Activated CD4-positive, alpha-beta T cell treated with anti-CD3 and anti-CD28 coated beads for 36 hours (primary cell): ENCODE measurements at regions of chr2 and their contacts with region 1.

Region 1: GRCh38 chr2:229780856-229781773 is 66.8 kb upstream of the DNER start:
- DNase-seq: no peak
- ATAC-seq: peak; percentile 68
- H3K4me3 Mint-ChIP-seq: no peak overlapping the region
- H3K27ac Mint-ChIP-seq: no peak overlapping the region
- H3K4me1 Mint-ChIP-seq: peaks cover 15% of the 10 kb centered on the region
- H3K27me3 Mint-ChIP-seq: no peaks in the 10 kb centered on the region

Region 2: DNA sequence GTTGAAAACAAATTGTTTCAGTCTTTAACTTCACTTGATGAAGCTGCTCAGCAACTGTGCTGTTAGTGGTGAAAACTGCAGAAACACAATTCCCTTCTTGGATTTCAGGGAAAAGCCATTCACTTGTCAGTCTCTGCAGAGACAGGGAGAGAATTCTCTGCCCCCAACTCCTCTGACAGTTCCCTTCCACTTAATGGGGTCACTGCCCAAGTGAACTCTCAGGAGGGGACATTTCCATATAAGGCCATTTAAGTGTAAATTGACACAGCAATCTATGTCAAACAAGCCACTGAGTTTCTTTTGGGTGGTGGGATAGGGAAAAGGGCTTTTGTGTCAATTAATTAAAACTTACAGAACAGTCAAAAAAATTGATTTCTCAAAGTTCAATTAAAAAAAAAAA is 15.4 kb before region 1 on chr2:
- CTCF ChIA-PET with region 1: interaction called, 18 read pairs
- POLR2A ChIA-PET with region 1: no interaction called
- intact Hi-C with region 1: no loop called
- DNase-seq: no peak
- ATAC-seq: no peak
- H3K4me3 Mint-ChIP-seq: no peak overlapping the region
- H3K27ac Mint-ChIP-seq: no peak overlapping the region
- H3K4me1 Mint-ChIP-seq: no peaks in the 10 kb centered on the region
- H3K27me3 Mint-ChIP-seq: no peaks in the 10 kb centered on the region

Region 3: GRCh38 chr2:229910832-229911412 is 129.8 kb after region 1 on chr2:
- CTCF ChIA-PET with region 1: no interaction called
- POLR2A ChIA-PET with region 1: no interaction called
- intact Hi-C with region 1: loop called in 1 of 2 experiments (anchors 5 kb)
- DNase-seq: peak; percentile 38
- ATAC-seq: peak; percentile 75
- H3K4me3 Mint-ChIP-seq: no peak overlapping the region
- H3K27ac Mint-ChIP-seq: peak overlapping the region; percentile 2
- H3K4me1 Mint-ChIP-seq: peaks cover 52% of the 10 kb centered on the region
- H3K27me3 Mint-ChIP-seq: no peaks in the 10 kb centered on the region

Region 4: GRCh38 chr2:230160112-230160660 is 379.1 kb after region 1 on chr2:
- CTCF ChIA-PET with region 1: interaction called, 7 read pairs
- POLR2A ChIA-PET with region 1: no interaction called
- intact Hi-C with region 1: loop called (anchors 5 to 10 kb)
- DNase-seq: peak; percentile 72
- ATAC-seq: peak; percentile 59
- H3K4me3 Mint-ChIP-seq: no peak overlapping the region
- H3K27ac Mint-ChIP-seq: no peak overlapping the region
- H3K4me1 Mint-ChIP-seq: peaks cover 8% of the 10 kb centered on the region
- H3K27me3 Mint-ChIP-seq: no peaks in the 10 kb centered on the region